Calu3 (cell line): ENCODE measurements at regions of chr11 and their contacts with region 1.

Region 1: GRCh38 chr11:48172818-48173609 is 43.6 kb upstream of the OR4B1 start:
- DNase-seq: peak; percentile 75
- H3K4me3 Mint-ChIP-seq: no peak overlapping the region
- H3K27ac Mint-ChIP-seq: no peak overlapping the region
- H3K4me1 Mint-ChIP-seq: no peaks in the 10 kb centered on the region
- H3K27me3 Mint-ChIP-seq: peaks cover 5% of the 10 kb centered on the region
- CTCF ChIP-seq: peak; percentile 91

Region 2: GRCh38 chr11:48307760-48308386 is 134.9 kb after region 1 on chr11:
- CTCF ChIA-PET with region 1: no interaction called
- intact Hi-C with region 1: loop called (anchors 5 kb)
- DNase-seq: peak; percentile 73
- H3K4me3 Mint-ChIP-seq: no peak overlapping the region
- H3K27ac Mint-ChIP-seq: no peak overlapping the region
- H3K4me1 Mint-ChIP-seq: no peaks in the 10 kb centered on the region
- H3K27me3 Mint-ChIP-seq: no peaks in the 10 kb centered on the region
- CTCF ChIP-seq: peak; percentile 76